ENCODE measurements at regions of chr9 and their contacts with region 1.

Region 1: DNA sequence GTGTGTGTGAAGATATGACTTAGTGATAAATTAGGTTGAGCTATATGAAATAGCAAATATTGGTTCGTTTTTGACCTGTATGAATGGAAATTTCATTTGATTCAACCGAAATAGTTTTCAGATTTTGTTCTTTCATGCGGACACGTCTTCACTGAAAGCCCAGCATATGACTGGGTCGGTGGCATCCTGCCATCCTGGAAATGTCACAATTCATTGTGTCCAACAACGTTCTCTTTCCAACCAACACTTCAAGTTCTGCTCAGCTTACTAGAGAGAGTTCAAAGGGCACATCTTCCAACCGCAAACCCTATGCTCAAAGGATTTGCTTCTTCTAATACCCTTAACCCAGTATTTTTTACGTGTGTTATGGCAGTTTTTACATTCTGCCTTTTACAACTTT is 252.5 kb downstream of the NTRK2 start:
- DNase-seq: no peak
- H3K4me3 ChIP-seq: no peak overlapping the region
- H3K27ac ChIP-seq: no peak overlapping the region
- H3K4me1 ChIP-seq: no peaks in the 10 kb centered on the region
- H3K27me3 ChIP-seq: no peaks in the 10 kb centered on the region
- CTCF ChIP-seq: no peak
- POLR2A ChIP-seq: no peak

Region 2: DNA sequence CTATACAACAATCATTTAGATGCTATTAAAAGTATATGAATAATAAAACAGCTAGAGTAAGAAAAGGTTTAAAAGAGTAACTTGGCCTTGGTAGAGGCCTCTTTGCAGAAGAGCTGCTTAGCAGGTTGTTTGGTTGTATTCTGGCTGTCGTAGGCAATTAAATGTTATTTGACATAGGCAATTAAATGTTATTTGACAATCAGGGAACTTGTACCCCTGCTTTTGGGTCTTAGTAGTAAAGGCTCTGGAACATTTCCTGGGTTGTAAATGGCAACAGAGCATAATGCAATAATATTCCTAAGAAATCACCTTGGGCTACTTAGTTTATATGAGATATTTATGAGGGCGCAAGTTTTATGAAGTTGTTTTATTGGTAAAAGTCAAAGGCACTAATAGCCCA is 497.1 kb before region 1 on chr9:
- CTCF ChIA-PET with region 1: no interaction called
- POLR2A ChIA-PET with region 1: interaction called, 10 read pairs
- dilution Hi-C with region 1: no loop called
- intact Hi-C with region 1: no loop called
- DNase-seq: no peak
- H3K4me3 ChIP-seq: no peak overlapping the region
- H3K27ac ChIP-seq: no peak overlapping the region
- H3K4me1 ChIP-seq: no peaks in the 10 kb centered on the region
- H3K27me3 ChIP-seq: no peaks in the 10 kb centered on the region
- CTCF ChIP-seq: no peak
- POLR2A ChIP-seq: no peak

Region 3: DNA sequence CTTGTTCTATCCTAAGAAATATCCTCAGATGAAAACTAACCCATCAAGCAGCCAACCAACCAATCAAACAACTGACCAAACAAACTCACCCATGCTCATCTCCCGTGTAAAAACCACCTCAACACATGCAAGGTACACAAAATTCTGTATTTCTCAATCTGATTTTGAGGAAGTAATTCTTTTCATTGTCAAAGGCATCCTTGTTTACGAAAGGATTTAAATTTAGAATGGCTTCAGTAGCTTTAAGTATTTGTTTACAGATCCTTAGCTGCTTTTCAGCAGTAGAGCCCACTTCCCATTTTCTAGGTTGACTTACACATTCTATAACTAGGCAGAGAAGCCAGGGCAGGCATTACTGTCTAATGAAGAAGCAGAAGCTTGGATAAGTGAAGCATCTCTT is 173.9 kb before region 1 on chr9:
- CTCF ChIA-PET with region 1: no interaction called
- POLR2A ChIA-PET with region 1: no interaction called
- dilution Hi-C with region 1: no loop called
- intact Hi-C with region 1: no loop called
- DNase-seq: no peak
- H3K4me3 ChIP-seq: no peak overlapping the region
- H3K27ac ChIP-seq: no peak overlapping the region
- H3K4me1 ChIP-seq: no peaks in the 10 kb centered on the region
- H3K27me3 ChIP-seq: no peaks in the 10 kb centered on the region
- CTCF ChIP-seq: no peak
- POLR2A ChIP-seq: no peak

Region 4: DNA sequence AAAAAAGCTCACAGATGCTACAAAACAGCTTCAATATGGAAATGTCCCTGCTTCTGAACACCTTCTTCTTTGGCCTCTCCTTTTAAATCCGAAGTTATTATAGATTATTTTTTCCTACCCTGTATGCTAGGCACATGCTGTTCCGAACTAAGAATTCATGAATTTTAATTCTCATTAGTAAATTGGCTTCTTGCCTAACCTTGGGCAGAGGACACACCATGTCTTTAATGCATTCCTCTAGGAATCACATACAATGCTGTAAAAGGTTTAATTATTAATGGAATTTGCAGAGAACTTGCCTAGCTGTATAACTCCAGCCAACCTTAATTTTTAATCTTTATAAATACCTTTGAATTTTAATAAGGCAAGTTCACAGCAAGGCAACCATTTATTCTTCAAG is 18.1 kb before region 1 on chr9:
- CTCF ChIA-PET with region 1: no interaction called
- POLR2A ChIA-PET with region 1: no interaction called
- dilution Hi-C with region 1: no loop called
- intact Hi-C with region 1: no loop called
- DNase-seq: no peak
- H3K4me3 ChIP-seq: no peak overlapping the region
- H3K27ac ChIP-seq: no peak overlapping the region
- H3K4me1 ChIP-seq: no peaks in the 10 kb centered on the region
- H3K27me3 ChIP-seq: peaks cover 0 to 4% of the 10 kb centered on the region in 2 experiments
- CTCF ChIP-seq: no peak
- POLR2A ChIP-seq: no peak

Region 5: GRCh38 chr9:84975926-84976325 is 53.9 kb after region 1 on chr9:
- CTCF ChIA-PET with region 1: no interaction called
- POLR2A ChIA-PET with region 1: no interaction called
- dilution Hi-C with region 1: no loop called
- intact Hi-C with region 1: no loop called
- DNase-seq: no peak
- H3K4me3 ChIP-seq: no peak overlapping the region
- H3K27ac ChIP-seq: no peak overlapping the region
- H3K4me1 ChIP-seq: no peaks in the 10 kb centered on the region
- H3K27me3 ChIP-seq: no peaks in the 10 kb centered on the region
- CTCF ChIP-seq: no peak
- POLR2A ChIP-seq: no peak

Region 6: GRCh38 chr9:85130260-85130659 is 208.2 kb after region 1 on chr9:
- CTCF ChIA-PET with region 1: no interaction called
- POLR2A ChIA-PET with region 1: no interaction called
- dilution Hi-C with region 1: no loop called
- intact Hi-C with region 1: no loop called
- DNase-seq: no peak
- H3K4me3 ChIP-seq: no peak overlapping the region
- H3K27ac ChIP-seq: no peak overlapping the region
- H3K4me1 ChIP-seq: no peaks in the 10 kb centered on the region
- H3K27me3 ChIP-seq: no peaks in the 10 kb centered on the region
- CTCF ChIP-seq: no peak
- POLR2A ChIP-seq: no peak